Sigmoid colon (tissue), 7 donors: ENCODE measurements at regions of chr1 and their contacts with region 1.

Region 1: DNA sequence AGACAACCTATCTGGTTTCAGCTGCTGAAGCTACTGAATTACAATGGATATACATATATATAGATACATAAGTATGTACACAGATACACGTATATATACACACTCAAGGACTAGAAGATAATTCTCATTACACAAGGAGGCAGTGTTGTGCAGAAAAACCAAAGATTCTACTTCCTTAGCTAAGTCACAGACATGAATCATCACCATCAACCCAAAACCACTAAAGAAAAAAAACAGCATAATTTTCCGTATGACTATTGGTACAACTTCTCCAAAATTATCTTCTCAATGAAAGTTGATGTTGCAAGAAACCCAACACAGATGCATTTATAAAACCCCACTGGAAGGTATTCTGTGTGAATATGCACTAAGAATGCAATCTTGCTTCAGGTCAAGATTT is 36.8 kb upstream of the RPF1 start:
- DNase-seq: no peak
- H3K4me3 ChIP-seq: no peak overlapping the region
- H3K27ac ChIP-seq: no peak overlapping the region
- H3K4me1 ChIP-seq: no peaks in the 10 kb centered on the region
- H3K27me3 ChIP-seq: no peaks in the 10 kb centered on the region
- CTCF ChIP-seq: peak in 3 of 4 experiments; percentile 20 to 50 (median 49)
- EP300 ChIP-seq: no peak
- POLR2A ChIP-seq: no peak

Region 2: DNA sequence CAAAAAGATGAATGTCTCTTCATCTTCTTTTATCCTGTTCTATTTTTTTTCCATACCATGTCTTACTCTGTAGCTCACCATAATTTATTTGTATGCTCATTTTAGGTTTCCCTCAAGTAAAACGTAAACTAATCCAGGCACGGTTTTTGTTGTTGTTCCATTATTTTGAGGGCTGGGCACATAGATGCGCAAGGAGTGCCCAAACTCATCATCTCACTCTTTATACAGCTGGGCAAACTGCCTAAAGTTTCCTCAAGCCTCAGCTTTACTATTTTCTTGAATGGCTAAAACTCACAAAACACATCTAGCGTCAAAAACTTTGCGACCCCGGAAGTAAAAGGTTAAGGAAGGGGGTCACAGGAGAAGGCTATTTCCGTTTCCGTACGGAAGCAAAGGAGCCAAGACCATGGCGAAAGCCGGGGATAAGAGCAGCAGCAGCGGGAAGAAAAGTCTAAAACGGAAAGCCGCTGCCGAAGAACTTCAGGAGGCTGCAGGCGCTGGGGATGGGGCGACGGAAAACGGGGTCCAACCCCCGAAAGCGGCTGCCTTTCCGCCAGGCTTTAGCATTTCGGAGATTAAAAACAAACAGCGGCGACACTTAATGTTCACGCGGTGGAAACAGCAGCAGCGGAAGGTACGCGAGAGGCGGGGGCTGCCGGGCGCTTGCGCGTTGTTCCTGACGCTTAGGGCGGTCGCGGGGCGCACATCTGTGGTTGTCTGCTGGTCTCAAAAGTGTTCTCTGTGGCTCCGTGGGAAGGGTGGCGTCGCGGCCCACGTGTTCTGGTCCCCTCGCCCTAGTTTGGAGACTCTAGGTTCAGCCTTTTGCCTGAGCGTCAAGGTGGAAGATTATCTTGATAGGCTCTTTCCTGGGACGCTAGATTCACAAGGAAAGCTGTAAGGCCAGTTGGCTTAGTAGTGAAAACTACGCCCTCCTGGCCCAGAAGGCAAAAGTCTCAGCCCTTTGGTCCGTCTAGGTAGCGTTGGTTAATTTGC is 36.9 kb after region 1 on chr1 and contains the start of gene RPF1:
- intact Hi-C with region 1: loop called (anchors 1 kb)
- DNase-seq: peak; percentile 79
- H3K4me3 ChIP-seq: peak within 1 kb of the TSS; percentile 68 to 81 (median 74)
- H3K27ac ChIP-seq: peak within 1 kb of the TSS; percentile 84 to 92 (median 88)
- H3K4me1 ChIP-seq: peaks cover 0 to 31% (median 20%) of the 10 kb centered on the region in 4 donors
- H3K27me3 ChIP-seq: peaks cover 0 to 22% (median 7%) of the 10 kb centered on the region in 3 donors
- CTCF ChIP-seq: no peak
- EP300 ChIP-seq: no peak
- POLR2A ChIP-seq: peak; percentile 61 to 63
- total RNA-seq, gene RPF1: 30.7 to 66.5 (median 41.8) TPM

Region 3: DNA sequence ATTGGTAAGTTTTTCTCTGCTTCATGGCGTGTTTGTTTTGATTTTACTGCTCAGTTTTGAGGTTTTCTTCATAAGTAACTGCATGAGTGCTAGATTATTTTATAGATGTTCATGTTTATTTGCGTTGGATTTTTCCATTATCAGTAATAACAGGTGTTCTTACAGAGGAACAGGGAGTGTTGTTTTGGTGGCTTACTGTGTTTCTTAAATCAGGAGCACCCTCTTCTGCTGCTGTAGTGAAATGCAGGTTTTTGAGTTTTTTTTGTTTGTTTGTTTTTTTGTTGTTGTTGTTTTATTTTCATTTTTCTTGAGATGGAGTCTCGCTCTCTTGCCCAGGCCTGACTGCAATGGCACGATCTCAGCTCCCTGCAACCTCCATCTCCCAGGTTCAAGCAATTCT is 99.4 kb after region 1 on chr1:
- intact Hi-C with region 1: loop called (anchors 5 kb)
- DNase-seq: no peak
- H3K4me3 ChIP-seq: no peak overlapping the region
- H3K27ac ChIP-seq: peak overlapping the region in 2 of 4 donors; percentile 17 to 48
- H3K4me1 ChIP-seq: peaks cover 0 to 30% (median 8%) of the 10 kb centered on the region in 4 donors
- H3K27me3 ChIP-seq: no peaks in the 10 kb centered on the region
- CTCF ChIP-seq: peak in 2 of 4 experiments; percentile 12 to 19
- EP300 ChIP-seq: no peak
- POLR2A ChIP-seq: no peak

Region 4: GRCh38 chr1:84603941-84604830 is 161.9 kb after region 1 on chr1:
- intact Hi-C with region 1: loop called (anchors 1 kb)
- DNase-seq: peak; percentile 78
- H3K4me3 ChIP-seq: peak overlapping the region; percentile 15 to 42 (median 38)
- H3K27ac ChIP-seq: peak overlapping the region; percentile 61 to 82 (median 76)
- H3K4me1 ChIP-seq: peaks cover 0 to 32% (median 19%) of the 10 kb centered on the region in 4 donors
- H3K27me3 ChIP-seq: no peaks in the 10 kb centered on the region
- CTCF ChIP-seq: peak; percentile 69 to 82 (median 79)
- EP300 ChIP-seq: no peak
- POLR2A ChIP-seq: no peak

Region 5: GRCh38 chr1:84620720-84621313 is 178.6 kb after region 1 on chr1:
- intact Hi-C with region 1: loop called (anchors 2 kb)
- DNase-seq: peak; percentile 88
- H3K4me3 ChIP-seq: peak overlapping the region; percentile 42 to 64 (median 58)
- H3K27ac ChIP-seq: peak overlapping the region; percentile 68 to 80 (median 76)
- H3K4me1 ChIP-seq: peaks cover 0 to 46% (median 22%) of the 10 kb centered on the region in 4 donors
- H3K27me3 ChIP-seq: no peaks in the 10 kb centered on the region
- CTCF ChIP-seq: peak; percentile 74 to 99 (median 79)
- EP300 ChIP-seq: no peak
- POLR2A ChIP-seq: no peak

Region 6: GRCh38 chr1:84753516-84754385 is 311.5 kb after region 1 on chr1:
- intact Hi-C with region 1: loop called (anchors 5 kb)
- DNase-seq: peak; percentile 85
- H3K4me3 ChIP-seq: no peak overlapping the region
- H3K27ac ChIP-seq: no peak overlapping the region
- H3K4me1 ChIP-seq: peaks cover 0 to 12% (median 1%) of the 10 kb centered on the region in 4 donors
- H3K27me3 ChIP-seq: no peaks in the 10 kb centered on the region
- CTCF ChIP-seq: peak; percentile 85 to 92 (median 91)
- EP300 ChIP-seq: no peak
- POLR2A ChIP-seq: no peak

Region 7: GRCh38 chr1:84772428-84772943 is 330.2 kb after region 1 on chr1:
- intact Hi-C with region 1: loop called (anchors 5 kb)
- DNase-seq: peak; percentile 91
- H3K4me3 ChIP-seq: no peak overlapping the region
- H3K27ac ChIP-seq: no peak overlapping the region
- H3K4me1 ChIP-seq: no peaks in the 10 kb centered on the region
- H3K27me3 ChIP-seq: no peaks in the 10 kb centered on the region
- CTCF ChIP-seq: peak; percentile 73 to 90 (median 80)
- EP300 ChIP-seq: no peak
- POLR2A ChIP-seq: no peak

Region 8: GRCh38 chr1:85638412-85638811 is 1196.2 kb after region 1 on chr1:
- intact Hi-C with region 1: no loop called
- DNase-seq: no peak
- H3K4me3 ChIP-seq: no peak overlapping the region
- H3K27ac ChIP-seq: no peak overlapping the region
- H3K4me1 ChIP-seq: no peaks in the 10 kb centered on the region
- H3K27me3 ChIP-seq: no peaks in the 10 kb centered on the region
- CTCF ChIP-seq: no peak
- EP300 ChIP-seq: no peak
- POLR2A ChIP-seq: no peak